ENCODE measurements at regions of chr15 and their contacts with region 1.

Region 1: DNA sequence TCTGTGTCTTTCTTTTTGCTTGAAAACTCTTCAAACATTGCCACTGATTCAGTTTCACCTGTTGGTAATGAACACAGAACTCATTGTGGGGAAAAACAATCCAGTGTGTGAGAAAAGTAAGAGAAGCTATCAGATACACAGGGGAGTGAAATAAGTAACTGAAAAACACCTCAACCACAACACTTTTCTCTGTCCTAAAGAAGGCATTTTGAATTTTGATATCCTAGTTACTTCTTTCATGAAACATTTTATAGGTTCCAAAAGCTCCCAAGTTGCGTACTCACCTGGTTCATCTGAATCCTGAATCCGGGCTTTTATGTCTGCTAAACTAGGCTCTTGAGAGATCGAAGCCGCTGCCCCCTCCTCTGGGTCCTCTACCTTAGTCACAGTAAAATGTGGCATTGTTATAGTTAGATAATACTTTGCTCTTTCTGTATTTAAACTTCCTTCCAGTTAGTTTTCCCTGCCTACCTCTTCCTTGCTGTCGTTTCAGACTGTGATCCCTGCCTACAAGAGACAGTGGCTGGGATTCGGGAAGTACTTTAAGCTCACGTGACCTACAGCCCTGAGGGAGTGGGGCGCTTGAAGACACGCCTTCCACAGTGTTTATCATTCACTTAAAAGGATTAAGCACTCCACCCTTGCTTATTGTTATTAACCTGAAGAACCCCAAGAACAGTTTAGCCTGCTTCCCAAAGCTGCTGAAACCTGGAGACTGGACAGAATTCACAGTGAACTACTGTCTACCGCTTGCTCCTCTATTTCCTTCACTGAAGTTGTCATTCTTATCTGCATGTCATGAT is 19.1 kb downstream of the SLC12A6 start:
- DNase-seq: peak; percentile 51
- ATAC-seq: peak; percentile 76
- H3K4me3 Mint-ChIP-seq: peak overlapping the region; percentile 86
- H3K27ac Mint-ChIP-seq: peak overlapping the region; percentile 91
- H3K4me1 Mint-ChIP-seq: peaks cover 50% of the 10 kb centered on the region
- H3K27me3 Mint-ChIP-seq: no peaks in the 10 kb centered on the region
- CTCF ChIP-seq: no peak

Region 2: DNA sequence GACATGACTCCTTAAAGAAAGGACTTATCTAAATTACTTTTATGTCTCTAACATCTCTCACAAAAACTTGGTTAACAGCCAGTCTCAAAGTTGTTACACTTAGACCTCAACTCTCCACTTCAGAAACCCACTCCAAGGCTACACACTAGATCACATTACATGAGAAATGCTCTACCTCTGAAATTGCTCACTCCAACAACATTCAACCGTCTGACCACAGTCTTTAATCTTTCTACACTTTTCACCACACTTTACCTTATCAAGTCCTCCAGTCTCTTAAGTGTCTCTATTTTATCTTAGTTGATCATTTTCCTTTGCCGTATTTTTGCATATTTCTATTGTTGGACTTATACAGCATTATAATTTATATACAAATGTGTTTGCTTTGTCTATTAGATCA is 13.3 kb after region 1 on chr15:
- CTCF ChIA-PET with region 1: interaction called, 23 read pairs
- POLR2A ChIA-PET with region 1: interaction called, 18 read pairs
- intact Hi-C with region 1: no loop called
- DNase-seq: no peak
- ATAC-seq: peak; percentile 65
- H3K4me3 Mint-ChIP-seq: peak overlapping the region; percentile 52
- H3K27ac Mint-ChIP-seq: peak overlapping the region; percentile 95
- H3K4me1 Mint-ChIP-seq: peaks cover 72% of the 10 kb centered on the region
- H3K27me3 Mint-ChIP-seq: no peaks in the 10 kb centered on the region
- CTCF ChIP-seq: no peak

Region 3: DNA sequence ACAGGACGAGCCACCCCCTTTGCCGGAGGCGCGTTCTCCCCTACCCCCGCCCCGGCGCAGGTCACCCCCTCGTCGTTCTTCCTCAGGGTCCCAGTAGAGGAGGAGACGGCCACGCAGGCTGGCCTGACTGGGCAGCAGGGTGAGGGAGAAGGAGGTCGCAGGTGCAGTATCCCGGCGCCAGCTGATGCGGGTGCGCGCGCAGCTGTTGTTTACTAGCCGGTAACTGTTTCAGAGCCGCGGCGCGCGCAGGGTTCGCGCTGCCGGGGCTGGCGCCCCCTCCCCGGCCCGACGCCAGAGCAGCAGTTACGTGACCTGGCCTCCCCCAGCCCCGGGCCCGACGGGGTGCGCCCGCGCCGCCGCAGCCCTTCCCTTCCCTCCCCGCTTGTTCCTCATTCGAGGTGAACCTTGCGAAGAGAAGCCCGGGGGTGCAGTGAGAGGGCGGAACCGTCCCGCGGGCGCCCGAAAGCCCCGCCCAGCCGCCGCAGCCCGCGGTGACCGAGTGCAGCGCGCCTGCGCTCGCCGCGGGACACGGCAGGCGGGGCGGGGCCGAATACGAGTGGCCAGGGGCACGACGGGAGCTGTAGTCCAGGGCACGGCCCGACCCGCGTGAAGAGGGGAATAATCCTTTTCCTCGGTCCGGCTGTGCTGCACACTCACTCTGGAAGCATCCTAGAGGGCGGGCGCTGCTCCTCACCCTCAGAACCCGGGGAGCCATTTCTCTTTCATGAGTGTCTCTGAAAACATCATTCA is 19.3 kb after region 1 on chr15 and contains the start of gene SLC12A6:
- CTCF ChIA-PET with region 1: interaction called, 11 read pairs
- POLR2A ChIA-PET with region 1: interaction called, 18 read pairs
- intact Hi-C with region 1: no loop called
- DNase-seq: peak; percentile 91
- ATAC-seq: peak; percentile 85
- H3K4me3 Mint-ChIP-seq: peak within 1 kb of the TSS; percentile 99
- H3K27ac Mint-ChIP-seq: peak within 1 kb of the TSS; percentile 95
- H3K4me1 Mint-ChIP-seq: peaks cover 49% of the 10 kb centered on the region
- H3K27me3 Mint-ChIP-seq: no peaks in the 10 kb centered on the region
- CTCF ChIP-seq: no peak
- total RNA-seq, gene SLC12A6: 22.2 to 24.8 TPM

Measured in activated CD8-positive, alpha-beta T cell treated with anti-CD3 and anti-CD28 coated beads for 36 hours (primary cell).